ENCODE measurements at regions of chr15 and their contacts with region 1.

Region 1: GRCh38 chr15:38354315-38354929 is 99.5 kb upstream of the FAM98B start:
- DNase-seq: peak; percentile 65
- ATAC-seq: peak; percentile 78
- H3K4me3 ChIP-seq: no peak overlapping the region
- H3K27ac ChIP-seq: no peak overlapping the region
- H3K4me1 ChIP-seq: no peaks in the 10 kb centered on the region
- H3K27me3 ChIP-seq: no peaks in the 10 kb centered on the region
- CTCF ChIP-seq: peak; percentile 41 to 87 (median 77); a peak in 5 of 6 replicates
- POLR2A ChIP-seq: no peak
- RAD21 ChIP-seq: peak; percentile 75

Region 2: GRCh38 chr15:38260077-38260476 is 94.3 kb before region 1 on chr15:
- CTCF ChIA-PET with region 1: no interaction called
- POLR2A ChIA-PET with region 1: no interaction called
- RAD21 ChIA-PET with region 1: no interaction called
- intact Hi-C with region 1: no loop called
- DNase-seq: no peak
- ATAC-seq: no peak
- H3K4me3 ChIP-seq: no peak overlapping the region
- H3K27ac ChIP-seq: no peak overlapping the region
- H3K4me1 ChIP-seq: peaks cover 2 to 3% of the 10 kb centered on the region in 2 experiments
- H3K27me3 ChIP-seq: no peaks in the 10 kb centered on the region
- CTCF ChIP-seq: no peak
- POLR2A ChIP-seq: no peak
- RAD21 ChIP-seq: no peak

Region 3: GRCh38 chr15:38683382-38684242 is 329.2 kb after region 1 on chr15:
- CTCF ChIA-PET with region 1: no interaction called
- POLR2A ChIA-PET with region 1: no interaction called
- RAD21 ChIA-PET with region 1: no interaction called
- intact Hi-C with region 1: loop called (anchors 10 kb)
- DNase-seq: peak; percentile 27
- ATAC-seq: peak; percentile 95
- H3K4me3 ChIP-seq: no peak overlapping the region
- H3K27ac ChIP-seq: no peak overlapping the region
- H3K4me1 ChIP-seq: peaks cover 0 to 3% of the 10 kb centered on the region in 2 experiments; a peak in 1 of 4 replicates
- H3K27me3 ChIP-seq: no peaks in the 10 kb centered on the region
- CTCF ChIP-seq: peak; percentile 53 to 77 (median 69); a peak in 5 of 6 replicates
- POLR2A ChIP-seq: no peak
- RAD21 ChIP-seq: peak; percentile 68